Heart left ventricle (tissue), 16 donors: ENCODE measurements at regions of chr5 and their contacts with region 1.

Region 1: DNA sequence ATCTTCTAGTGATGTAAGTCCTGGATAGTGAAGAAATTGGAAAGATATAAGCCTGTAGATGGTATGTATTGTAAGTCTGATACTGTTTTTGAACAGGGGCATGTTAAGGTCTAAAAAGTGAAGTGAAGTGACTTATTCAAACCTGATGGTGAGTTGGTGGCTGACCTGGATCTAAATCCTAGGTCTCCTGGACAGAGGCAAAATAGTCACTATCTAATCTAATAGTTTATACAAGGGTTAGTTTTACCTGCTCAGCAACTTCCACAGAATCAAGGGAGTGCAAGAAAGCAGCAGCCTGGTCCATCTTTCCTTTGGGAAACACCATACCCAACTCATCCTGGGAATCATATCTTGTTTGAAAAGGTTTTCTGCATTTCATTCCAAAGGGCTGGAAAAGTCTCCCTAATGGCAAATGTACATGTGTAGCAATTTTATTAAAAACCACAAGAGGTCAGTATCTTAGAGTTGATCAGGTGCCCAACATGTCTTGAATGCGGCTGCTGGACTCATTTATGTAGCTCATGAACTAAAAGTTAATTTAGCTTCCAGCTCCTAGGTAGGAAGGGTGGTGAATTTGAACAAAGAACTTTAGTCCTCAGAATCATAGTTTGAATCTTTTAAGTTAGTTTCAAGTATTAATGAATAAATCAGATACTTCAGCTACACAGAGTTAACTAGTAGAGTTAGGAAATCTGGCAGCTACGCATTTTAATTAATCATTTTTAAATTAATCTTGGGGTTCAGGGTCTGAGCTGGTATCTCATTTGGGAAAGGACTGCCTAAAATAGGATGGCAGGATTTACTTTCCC is 26.0 kb downstream of the SKP2 start:
- DNase-seq: no peak
- ATAC-seq: peak in 1 of 4 donors; percentile 60
- H3K4me3 ChIP-seq: no peak overlapping the region
- H3K27ac ChIP-seq: no peak overlapping the region
- H3K4me1 ChIP-seq: no peaks in the 10 kb centered on the region
- H3K27me3 ChIP-seq: no peaks in the 10 kb centered on the region
- CTCF ChIP-seq: peak; percentile 33 to 68 (median 50)
- POLR2A ChIP-seq: no peak

Region 2: GRCh38 chr5:35345222-35345621 is 832.7 kb before region 1 on chr5:
- intact Hi-C with region 1: no loop called
- DNase-seq: no peak
- ATAC-seq: no peak
- H3K4me3 ChIP-seq: no peak overlapping the region
- H3K27ac ChIP-seq: no peak overlapping the region
- H3K4me1 ChIP-seq: no peaks in the 10 kb centered on the region
- H3K27me3 ChIP-seq: no peaks in the 10 kb centered on the region
- CTCF ChIP-seq: no peak
- POLR2A ChIP-seq: no peak

Region 3: GRCh38 chr5:36403632-36404311 is 225.9 kb after region 1 on chr5:
- intact Hi-C with region 1: loop called in 6 of 10 experiments (anchors 5 to 10 kb)
- DNase-seq: peak in 4 of 5 donors; percentile 22 to 53 (median 36)
- ATAC-seq: peak; percentile 45 to 80 (median 60)
- H3K4me3 ChIP-seq: no peak overlapping the region
- H3K27ac ChIP-seq: peak overlapping the region in 10 of 12 donors; percentile 3 to 65 (median 31)
- H3K4me1 ChIP-seq: peaks cover 0 to 10% (median 0%) of the 10 kb centered on the region in 12 donors
- H3K27me3 ChIP-seq: no peaks in the 10 kb centered on the region
- CTCF ChIP-seq: no peak
- POLR2A ChIP-seq: no peak